Heart right ventricle (tissue), 16 donors: ENCODE measurements at regions of chr18 and their contacts with region 1.

Region 1: DNA sequence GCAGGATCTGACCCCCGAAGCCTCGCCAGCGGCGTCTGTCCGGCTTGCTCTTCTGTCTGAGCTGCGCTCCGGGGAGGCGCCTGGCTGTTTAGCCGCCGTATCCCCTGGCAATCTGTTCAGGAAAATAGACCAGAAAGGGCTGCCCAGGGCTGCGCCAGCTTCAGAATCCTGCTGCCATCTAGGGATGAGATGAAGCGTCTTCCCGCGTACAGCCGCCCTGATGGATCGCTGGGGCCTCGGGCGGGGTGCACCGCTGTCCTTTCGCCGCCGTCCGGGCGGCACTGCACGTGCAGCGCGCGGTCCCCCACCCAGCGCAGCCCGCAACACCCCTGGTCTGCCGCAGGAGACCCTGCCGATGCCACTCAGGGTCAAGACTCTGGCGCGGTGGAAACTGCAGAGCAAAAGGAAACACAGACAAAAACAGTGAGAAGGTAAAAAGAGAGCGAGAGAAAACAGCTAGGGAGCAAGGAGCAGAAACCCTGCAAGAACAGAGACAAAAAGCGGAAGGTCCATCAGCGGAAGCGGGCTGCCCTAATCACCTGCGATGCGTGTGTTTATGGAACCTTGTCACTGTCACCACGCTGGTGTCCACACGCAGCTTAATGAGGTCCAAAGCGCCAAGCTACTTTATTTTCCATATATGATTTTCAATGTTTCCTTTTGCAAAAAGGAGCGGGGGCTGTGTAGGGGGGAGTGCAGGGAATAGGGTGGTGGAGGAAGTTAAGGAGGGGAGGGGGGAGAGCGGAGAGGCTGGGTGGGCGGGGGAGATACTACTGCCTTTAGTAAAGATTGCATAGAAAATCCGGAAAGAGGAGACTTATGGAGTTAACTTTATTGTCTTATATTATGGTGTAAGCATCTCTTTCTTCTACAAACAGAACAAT is 2113.3 kb upstream of the PIK3C3 start:
- DNase-seq: peak; percentile 4 to 20
- ATAC-seq: peak in 5 of 8 donors; percentile 11 to 69 (median 60)
- H3K4me3 ChIP-seq: peak overlapping the region in 8 of 10 donors; percentile 1 to 46 (median 34)
- H3K27ac ChIP-seq: no peak overlapping the region
- H3K4me1 ChIP-seq: peaks cover 0 to 16% (median 8%) of the 10 kb centered on the region in 9 donors
- H3K27me3 ChIP-seq: peaks cover 0 to 38% (median 23%) of the 10 kb centered on the region in 7 donors
- CTCF ChIP-seq: peak in 6 of 9 donors; percentile 8 to 32 (median 24)

Region 2: DNA sequence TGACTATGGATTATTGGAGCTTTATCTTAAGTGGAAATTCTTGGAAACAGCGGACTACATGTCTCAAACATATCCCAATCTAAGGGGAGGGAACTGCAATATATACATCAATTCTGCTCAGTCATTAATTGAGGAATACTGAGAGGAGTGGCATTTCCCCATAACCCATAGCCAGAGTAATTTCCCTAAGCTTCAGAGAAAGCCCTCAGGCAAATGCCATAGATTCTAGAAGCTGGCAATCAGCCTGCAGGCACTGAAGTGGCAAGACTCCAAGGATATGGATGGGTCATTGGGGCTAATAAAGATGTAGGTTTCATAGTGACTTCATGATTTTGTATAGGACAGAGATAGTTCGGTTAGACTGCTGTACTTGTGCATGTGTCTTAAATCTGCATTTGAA is 152.8 kb after region 1 on chr18:
- intact Hi-C with region 1: loop called in 1 of 10 experiments (anchors 10 kb)
- DNase-seq: no peak
- ATAC-seq: no peak
- H3K4me3 ChIP-seq: no peak overlapping the region
- H3K27ac ChIP-seq: no peak overlapping the region
- H3K4me1 ChIP-seq: no peaks in the 10 kb centered on the region
- H3K27me3 ChIP-seq: no peaks in the 10 kb centered on the region
- CTCF ChIP-seq: no peak

Region 3: GRCh38 chr18:40222776-40223175 is 381.1 kb after region 1 on chr18:
- intact Hi-C with region 1: no loop called
- DNase-seq: no peak
- ATAC-seq: no peak
- H3K4me3 ChIP-seq: no peak overlapping the region
- H3K27ac ChIP-seq: no peak overlapping the region
- H3K4me1 ChIP-seq: no peaks in the 10 kb centered on the region
- H3K27me3 ChIP-seq: no peaks in the 10 kb centered on the region
- CTCF ChIP-seq: no peak